Activated CD4-positive, alpha-beta memory T cell treated with anti-CD3 and anti-CD28 coated beads for 36 hours (primary cell): ENCODE measurements at regions of chr10 and their contacts with region 1.

Region 1: GRCh38 chr10:32367793-32368453 is 21.0 kb upstream of the EPC1 start:
- DNase-seq: peak; percentile 83
- H3K4me3 Mint-ChIP-seq: peak overlapping the region; percentile 39
- H3K27ac Mint-ChIP-seq: peak overlapping the region; percentile 42
- H3K4me1 Mint-ChIP-seq: peaks cover 64% of the 10 kb centered on the region
- H3K27me3 Mint-ChIP-seq: no peaks in the 10 kb centered on the region

Region 2: DNA sequence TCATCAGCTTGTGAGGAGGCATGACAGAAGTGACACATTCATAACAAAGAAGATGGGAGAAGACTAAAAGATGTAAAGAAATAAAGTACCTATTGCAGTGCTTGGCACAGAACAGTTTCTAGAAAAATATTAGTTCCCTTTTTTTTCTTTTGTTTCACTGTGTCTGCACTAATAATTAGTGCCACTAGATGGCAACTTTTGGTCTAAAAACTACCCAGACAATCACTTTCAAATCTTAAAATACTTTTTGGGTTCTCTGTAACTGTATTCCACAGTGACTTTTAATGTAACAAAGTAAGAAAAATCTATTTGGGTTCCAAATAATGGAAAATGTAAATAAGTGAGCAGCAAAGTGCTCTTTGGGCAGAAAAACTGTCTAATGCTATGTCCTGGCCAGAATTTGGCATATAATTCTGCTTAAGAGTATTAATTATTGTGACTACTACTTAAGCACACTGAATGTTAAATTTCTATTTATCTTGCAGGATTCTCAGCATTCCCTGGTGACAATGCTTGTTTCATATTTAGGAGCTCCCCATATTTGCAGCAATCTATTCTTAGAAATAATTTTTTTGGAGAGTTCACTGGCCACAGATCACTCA is 176.9 kb before region 1 on chr10:
- CTCF ChIA-PET with region 1: interaction called, 35 read pairs
- POLR2A ChIA-PET with region 1: no interaction called
- intact Hi-C with region 1: loop called (anchors 2 kb)
- DNase-seq: no peak
- H3K4me3 Mint-ChIP-seq: no peak overlapping the region
- H3K27ac Mint-ChIP-seq: no peak overlapping the region
- H3K4me1 Mint-ChIP-seq: no peaks in the 10 kb centered on the region
- H3K27me3 Mint-ChIP-seq: no peaks in the 10 kb centered on the region

Region 3: DNA sequence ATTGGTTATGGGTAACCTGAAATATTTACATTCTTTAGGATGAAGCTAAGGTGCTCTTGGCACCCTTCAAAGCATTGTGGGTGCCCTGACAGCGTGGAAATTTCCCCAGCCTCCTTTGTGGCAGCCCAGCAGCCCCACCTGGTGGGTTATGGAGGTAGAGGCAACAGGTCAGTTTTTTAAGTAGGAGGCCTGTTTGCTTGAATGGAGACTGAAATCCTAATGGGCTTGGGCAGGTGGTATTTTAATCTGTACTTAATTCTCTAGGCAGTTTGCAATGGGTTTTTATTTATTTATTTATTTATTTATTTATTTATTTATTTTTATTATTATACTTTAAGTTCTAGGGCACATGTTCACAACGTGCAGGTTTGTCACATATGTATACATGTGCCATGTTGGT is 160.4 kb before region 1 on chr10:
- CTCF ChIA-PET with region 1: interaction called, 5 read pairs
- POLR2A ChIA-PET with region 1: no interaction called
- intact Hi-C with region 1: loop called (anchors 5 kb)
- DNase-seq: peak; percentile 74
- H3K4me3 Mint-ChIP-seq: no peak overlapping the region
- H3K27ac Mint-ChIP-seq: no peak overlapping the region
- H3K4me1 Mint-ChIP-seq: peaks cover 3% of the 10 kb centered on the region
- H3K27me3 Mint-ChIP-seq: peaks cover 3% of the 10 kb centered on the region

Region 4: GRCh38 chr10:32256613-32257437 is 111.1 kb before region 1 on chr10:
- CTCF ChIA-PET with region 1: interaction called, 40 read pairs
- POLR2A ChIA-PET with region 1: no interaction called
- intact Hi-C with region 1: loop called (anchors 1 kb)
- DNase-seq: peak; percentile 81
- H3K4me3 Mint-ChIP-seq: no peak overlapping the region
- H3K27ac Mint-ChIP-seq: no peak overlapping the region
- H3K4me1 Mint-ChIP-seq: peaks cover 15% of the 10 kb centered on the region
- H3K27me3 Mint-ChIP-seq: no peaks in the 10 kb centered on the region

Region 5: DNA sequence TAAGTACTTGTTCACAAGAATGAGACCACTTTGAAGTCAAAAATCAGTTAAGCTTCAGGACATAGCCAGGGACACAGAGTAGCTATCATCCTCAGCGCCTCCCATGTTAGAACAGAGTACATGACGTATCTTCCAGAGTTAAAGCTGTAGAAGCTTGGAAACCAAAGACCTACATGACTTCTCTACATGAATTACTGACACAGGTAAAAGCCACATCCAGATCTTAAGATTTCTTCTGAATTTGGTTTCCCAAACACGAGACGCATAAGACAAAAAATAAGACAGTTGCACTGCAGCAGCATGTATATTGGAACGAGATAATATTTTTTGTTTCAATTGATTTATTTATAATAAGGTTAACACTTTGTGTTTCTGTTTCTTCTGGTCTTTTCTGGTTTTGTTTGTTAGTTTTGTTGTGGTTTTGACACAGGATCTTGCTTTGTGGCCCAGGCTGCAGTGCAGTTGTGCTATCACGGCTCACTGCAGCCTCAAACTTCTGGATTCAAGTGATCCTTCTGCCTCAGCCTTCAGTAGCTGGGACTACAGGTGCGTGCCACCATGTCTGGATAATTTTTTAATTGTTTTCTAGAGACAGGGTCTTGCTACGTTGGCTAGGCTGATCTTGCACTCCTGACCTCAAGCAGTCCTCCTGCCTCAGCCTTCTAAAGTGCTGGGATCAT is 10.7 kb before region 1 on chr10:
- CTCF ChIA-PET with region 1: interaction called, 26 read pairs
- POLR2A ChIA-PET with region 1: interaction called, 3 read pairs
- intact Hi-C with region 1: loop called (anchors 1 kb)
- DNase-seq: peak; percentile 44
- H3K4me3 Mint-ChIP-seq: peak overlapping the region; percentile 59
- H3K27ac Mint-ChIP-seq: peak overlapping the region; percentile 82
- H3K4me1 Mint-ChIP-seq: peaks cover 67% of the 10 kb centered on the region
- H3K27me3 Mint-ChIP-seq: no peaks in the 10 kb centered on the region